ENCODE measurements at regions of chr1 and their contacts with region 1.

Region 1: DNA sequence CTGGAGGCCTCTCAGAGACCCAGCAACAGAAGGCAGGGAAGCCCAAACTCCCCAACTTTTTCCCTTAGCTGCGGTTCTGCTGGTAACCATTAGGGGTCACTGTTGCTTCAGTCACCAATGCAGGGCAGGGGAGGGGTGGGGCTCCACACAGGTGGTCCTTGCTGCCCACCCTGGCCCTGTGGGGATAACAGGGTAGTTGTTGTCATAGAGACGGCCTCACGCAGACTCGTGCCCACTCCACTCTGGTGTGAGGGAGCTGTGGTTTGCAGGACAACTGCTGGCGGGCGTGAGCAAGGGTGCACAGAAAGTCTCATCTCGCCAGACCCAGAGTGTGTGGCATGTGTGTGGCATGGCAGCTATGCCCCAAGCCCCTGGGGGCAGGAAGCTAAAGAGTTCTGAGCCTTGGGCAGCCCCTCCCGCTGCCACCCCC is 19.9 kb downstream of the INSRR start:
- DNase-seq: peak; percentile 64
- ATAC-seq: peak; percentile 54
- H3K4me3 Mint-ChIP-seq: no peak overlapping the region
- H3K27ac Mint-ChIP-seq: no peak overlapping the region
- H3K4me1 Mint-ChIP-seq: peaks cover 41% of the 10 kb centered on the region
- H3K27me3 Mint-ChIP-seq: peaks cover 39% of the 10 kb centered on the region
- CTCF ChIP-seq: peak; percentile 95

Region 2: DNA sequence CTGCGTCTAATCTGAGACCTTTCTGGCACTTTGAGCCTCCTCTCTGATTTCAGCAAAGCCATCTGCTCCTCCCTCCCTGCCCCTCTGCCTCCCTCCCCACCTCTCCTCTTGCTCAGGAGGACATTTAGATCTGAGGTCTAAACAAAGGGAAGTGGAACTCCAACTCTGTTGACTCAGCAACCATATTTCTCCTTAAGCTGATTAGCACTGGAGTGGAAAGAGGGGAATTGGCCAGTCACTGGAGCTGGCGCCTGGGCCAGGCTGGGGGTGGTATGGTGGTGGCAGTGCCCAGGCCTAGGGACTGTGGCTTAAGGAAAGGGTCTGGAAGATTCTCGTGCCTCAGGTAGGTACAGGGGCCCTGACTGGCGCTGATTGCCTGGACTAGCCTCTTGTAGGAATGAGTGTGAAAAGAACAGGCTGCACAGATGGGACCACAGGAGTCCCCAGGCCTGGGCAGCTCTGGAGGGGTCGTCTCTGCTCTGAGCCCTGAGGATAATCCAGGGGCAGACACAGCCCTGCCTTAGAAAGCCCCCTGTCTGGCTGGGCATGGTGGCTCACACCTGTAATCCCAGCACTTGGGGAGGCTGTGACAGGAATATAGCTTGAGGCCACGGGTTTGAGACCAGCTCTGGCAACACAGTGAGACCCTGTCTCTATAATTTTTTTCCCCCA is 34.3 kb before region 1 on chr1:
- CTCF ChIA-PET with region 1: interaction called, 43 read pairs
- POLR2A ChIA-PET with region 1: interaction called, 10 read pairs
- intact Hi-C with region 1: no loop called
- DNase-seq: no peak
- ATAC-seq: no peak
- H3K4me3 Mint-ChIP-seq: no peak overlapping the region
- H3K27ac Mint-ChIP-seq: peak overlapping the region; percentile 39
- H3K4me1 Mint-ChIP-seq: peaks cover 36% of the 10 kb centered on the region
- H3K27me3 Mint-ChIP-seq: no peaks in the 10 kb centered on the region
- CTCF ChIP-seq: no peak

Region 3: DNA sequence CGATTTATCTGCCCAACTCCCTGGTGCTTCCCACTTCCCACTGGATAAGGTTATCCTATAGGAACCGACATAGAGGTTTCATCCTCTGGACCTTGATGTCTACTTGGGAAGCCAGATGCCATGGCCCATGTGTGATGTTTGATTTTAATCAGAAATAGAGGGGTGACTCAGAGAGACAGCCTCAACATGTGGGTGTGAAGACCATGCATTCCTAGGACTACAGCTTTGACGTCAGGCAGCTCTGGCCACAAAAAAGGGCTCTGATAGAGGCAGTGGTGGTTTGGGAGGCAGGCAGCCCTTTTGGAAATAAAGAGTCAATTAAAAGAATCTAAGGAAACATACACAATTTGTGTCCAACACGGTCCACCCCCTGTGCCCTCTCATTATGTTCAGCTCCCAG is 17.2 kb before region 1 on chr1:
- CTCF ChIA-PET with region 1: interaction called, 93 read pairs
- POLR2A ChIA-PET with region 1: interaction called, 5 read pairs
- intact Hi-C with region 1: no loop called
- DNase-seq: peak; percentile 85
- ATAC-seq: peak; percentile 84
- H3K4me3 Mint-ChIP-seq: no peak overlapping the region
- H3K27ac Mint-ChIP-seq: peak overlapping the region; percentile 65
- H3K4me1 Mint-ChIP-seq: peaks cover 45% of the 10 kb centered on the region
- H3K27me3 Mint-ChIP-seq: no peaks in the 10 kb centered on the region
- CTCF ChIP-seq: no peak

Region 4: GRCh38 chr1:156869455-156869854 is 30.5 kb after region 1 on chr1:
- CTCF ChIA-PET with region 1: interaction called, 273 read pairs
- POLR2A ChIA-PET with region 1: no interaction called
- intact Hi-C with region 1: no loop called
- DNase-seq: no peak
- ATAC-seq: no peak
- H3K4me3 Mint-ChIP-seq: no peak overlapping the region
- H3K27ac Mint-ChIP-seq: no peak overlapping the region
- H3K4me1 Mint-ChIP-seq: peaks cover 29% of the 10 kb centered on the region
- H3K27me3 Mint-ChIP-seq: peaks cover under 1% of the 10 kb centered on the region
- CTCF ChIP-seq: no peak

Region 5: GRCh38 chr1:156927215-156928042 is 88.4 kb after region 1 on chr1:
- CTCF ChIA-PET with region 1: interaction called, 12 read pairs
- POLR2A ChIA-PET with region 1: no interaction called
- intact Hi-C with region 1: no loop called
- DNase-seq: peak; percentile 83
- ATAC-seq: peak; percentile 70
- H3K4me3 Mint-ChIP-seq: peak overlapping the region; percentile 41
- H3K27ac Mint-ChIP-seq: no peak overlapping the region
- H3K4me1 Mint-ChIP-seq: peaks cover 32% of the 10 kb centered on the region
- H3K27me3 Mint-ChIP-seq: peaks cover 77% of the 10 kb centered on the region
- CTCF ChIP-seq: peak; percentile 78